ENCODE measurements at regions of chr6 and their contacts with region 1.

Region 1: GRCh38 chr6:11496152-11497060 is 41.1 kb upstream of the TMEM170B start:
- DNase-seq: peak; percentile 87
- H3K4me3 Mint-ChIP-seq: no peak overlapping the region
- H3K27ac Mint-ChIP-seq: no peak overlapping the region
- H3K4me1 Mint-ChIP-seq: peaks cover 6% of the 10 kb centered on the region
- H3K27me3 Mint-ChIP-seq: no peaks in the 10 kb centered on the region
- CTCF ChIP-seq: peak; percentile 95

Region 2: DNA sequence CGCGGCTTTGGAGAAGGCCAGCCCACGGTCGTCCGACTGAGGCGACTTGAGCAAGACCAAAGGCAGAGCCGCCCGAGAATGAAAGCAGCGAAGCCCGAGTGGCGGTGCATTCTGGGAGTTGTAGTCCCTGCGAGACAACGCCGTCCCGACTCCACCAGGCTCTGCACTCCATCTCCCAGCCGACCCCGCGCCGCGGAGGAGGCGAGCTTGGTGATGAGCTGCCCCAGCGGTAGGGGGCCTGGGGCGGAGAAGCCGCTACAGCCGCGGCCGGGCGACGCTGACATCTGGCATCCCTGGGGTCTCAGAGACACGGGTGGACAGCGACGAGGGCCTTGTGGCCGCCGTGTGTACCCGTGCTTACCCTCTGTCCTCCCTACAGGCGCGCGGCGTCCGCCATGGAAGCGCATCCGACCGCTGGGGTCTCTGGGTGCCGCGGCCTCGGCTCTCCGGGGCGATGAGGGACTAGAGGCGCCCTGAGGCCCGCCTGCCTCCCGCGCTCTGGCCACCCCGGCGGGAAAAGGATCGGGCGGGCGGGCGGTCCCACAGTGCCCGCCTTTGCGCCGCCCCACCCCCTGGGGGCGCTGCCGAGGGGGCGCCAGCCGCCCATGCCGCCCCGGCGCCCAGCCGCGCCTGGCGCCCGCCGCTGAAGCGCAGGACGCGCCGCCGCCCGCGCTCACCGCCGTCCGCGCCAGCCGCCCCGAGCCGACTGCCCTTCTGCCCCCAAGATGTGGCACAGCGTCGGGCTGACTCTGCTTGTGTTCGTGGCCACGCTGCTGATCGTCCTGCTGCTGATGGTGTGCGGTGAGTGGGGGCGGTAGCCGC is 402.6 kb before region 1 on chr6 and contains the start of gene SMIM13:
- CTCF ChIA-PET with region 1: interaction called, 19 read pairs
- POLR2A ChIA-PET with region 1: interaction called, 6 read pairs
- intact Hi-C with region 1: loop called (anchors 1 kb)
- DNase-seq: peak; percentile 97
- H3K4me3 Mint-ChIP-seq: peak within 1 kb of the TSS; percentile 96
- H3K27ac Mint-ChIP-seq: peak within 1 kb of the TSS; percentile 71
- H3K4me1 Mint-ChIP-seq: peaks cover 11% of the 10 kb centered on the region
- H3K27me3 Mint-ChIP-seq: no peaks in the 10 kb centered on the region
- CTCF ChIP-seq: peak; percentile 51
- total RNA-seq, gene SMIM13: 28.1 and 29.8 TPM in 2 replicates

Region 3: GRCh38 chr6:11224252-11224965 is 272.0 kb before region 1 on chr6:
- CTCF ChIA-PET with region 1: interaction called, 16 read pairs
- POLR2A ChIA-PET with region 1: interaction called, 3 read pairs
- intact Hi-C with region 1: no loop called
- DNase-seq: no peak
- H3K4me3 Mint-ChIP-seq: no peak overlapping the region
- H3K27ac Mint-ChIP-seq: no peak overlapping the region
- H3K4me1 Mint-ChIP-seq: peaks cover 41% of the 10 kb centered on the region
- H3K27me3 Mint-ChIP-seq: no peaks in the 10 kb centered on the region
- CTCF ChIP-seq: no peak

Region 4: GRCh38 chr6:11317885-11318771 is 178.3 kb before region 1 on chr6:
- CTCF ChIA-PET with region 1: interaction called, 4 read pairs
- POLR2A ChIA-PET with region 1: no interaction called
- intact Hi-C with region 1: loop called (anchors 1 kb)
- DNase-seq: peak; percentile 95
- H3K4me3 Mint-ChIP-seq: no peak overlapping the region
- H3K27ac Mint-ChIP-seq: peak overlapping the region; percentile 4
- H3K4me1 Mint-ChIP-seq: peaks cover 33% of the 10 kb centered on the region
- H3K27me3 Mint-ChIP-seq: no peaks in the 10 kb centered on the region
- CTCF ChIP-seq: no peak

Region 5: DNA sequence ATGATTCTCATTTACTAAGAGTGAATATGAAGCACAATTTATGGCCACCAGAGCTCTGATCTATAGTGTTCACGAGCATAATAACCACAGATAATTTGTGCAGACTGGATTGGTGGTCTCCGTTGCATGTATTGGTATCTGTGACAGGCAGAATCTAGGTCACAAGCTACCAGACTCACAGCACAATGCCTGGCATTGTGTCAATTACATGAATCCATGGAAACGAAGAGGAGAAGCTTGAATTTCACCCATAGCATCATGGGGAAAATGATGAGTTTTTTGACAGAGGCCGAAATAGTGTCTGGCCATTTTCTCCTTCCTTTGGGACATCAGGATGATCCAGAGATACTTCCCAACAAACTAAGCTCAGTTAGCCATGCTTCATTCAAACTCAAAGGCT is 11.1 kb before region 1 on chr6:
- CTCF ChIA-PET with region 1: interaction called, 13 read pairs
- POLR2A ChIA-PET with region 1: no interaction called
- intact Hi-C with region 1: no loop called
- DNase-seq: no peak
- H3K4me3 Mint-ChIP-seq: no peak overlapping the region
- H3K27ac Mint-ChIP-seq: no peak overlapping the region
- H3K4me1 Mint-ChIP-seq: no peaks in the 10 kb centered on the region
- H3K27me3 Mint-ChIP-seq: no peaks in the 10 kb centered on the region
- CTCF ChIP-seq: no peak

Region 6: GRCh38 chr6:11824986-11825385 is 328.6 kb after region 1 on chr6:
- CTCF ChIA-PET with region 1: no interaction called
- POLR2A ChIA-PET with region 1: no interaction called
- intact Hi-C with region 1: no loop called
- DNase-seq: no peak
- H3K4me3 Mint-ChIP-seq: no peak overlapping the region
- H3K27ac Mint-ChIP-seq: no peak overlapping the region
- H3K4me1 Mint-ChIP-seq: peaks cover 4% of the 10 kb centered on the region
- H3K27me3 Mint-ChIP-seq: no peaks in the 10 kb centered on the region
- CTCF ChIP-seq: no peak